PC-9 (cell line): ENCODE measurements at regions of chr1 and their contacts with region 1.

Region 1: DNA sequence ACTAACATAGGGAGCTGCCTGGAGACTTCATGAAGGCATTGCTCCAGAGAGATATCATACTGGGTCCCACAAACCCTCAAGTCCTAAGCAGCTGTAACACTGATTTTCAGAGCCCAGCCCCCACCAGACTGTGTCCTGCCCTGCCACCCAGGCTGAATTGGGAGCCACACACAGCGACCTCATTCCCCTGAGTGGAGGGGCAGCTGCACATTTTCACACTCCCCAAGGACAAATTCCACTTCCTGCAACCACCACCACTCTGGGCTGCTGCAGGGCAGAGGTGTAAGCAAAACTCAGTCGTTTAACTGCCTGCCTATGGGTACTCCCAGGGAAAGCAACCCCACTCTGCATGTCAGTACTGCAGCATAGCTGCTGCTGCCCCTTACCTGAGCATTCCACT is 19.8 kb downstream of the DTL start:
- DNase-seq: no peak
- H3K4me3 ChIP-seq: no peak overlapping the region
- H3K27ac ChIP-seq: no peak overlapping the region
- H3K4me1 ChIP-seq: no peaks in the 10 kb centered on the region
- H3K27me3 ChIP-seq: no peaks in the 10 kb centered on the region
- CTCF ChIP-seq: no peak

Region 2: DNA sequence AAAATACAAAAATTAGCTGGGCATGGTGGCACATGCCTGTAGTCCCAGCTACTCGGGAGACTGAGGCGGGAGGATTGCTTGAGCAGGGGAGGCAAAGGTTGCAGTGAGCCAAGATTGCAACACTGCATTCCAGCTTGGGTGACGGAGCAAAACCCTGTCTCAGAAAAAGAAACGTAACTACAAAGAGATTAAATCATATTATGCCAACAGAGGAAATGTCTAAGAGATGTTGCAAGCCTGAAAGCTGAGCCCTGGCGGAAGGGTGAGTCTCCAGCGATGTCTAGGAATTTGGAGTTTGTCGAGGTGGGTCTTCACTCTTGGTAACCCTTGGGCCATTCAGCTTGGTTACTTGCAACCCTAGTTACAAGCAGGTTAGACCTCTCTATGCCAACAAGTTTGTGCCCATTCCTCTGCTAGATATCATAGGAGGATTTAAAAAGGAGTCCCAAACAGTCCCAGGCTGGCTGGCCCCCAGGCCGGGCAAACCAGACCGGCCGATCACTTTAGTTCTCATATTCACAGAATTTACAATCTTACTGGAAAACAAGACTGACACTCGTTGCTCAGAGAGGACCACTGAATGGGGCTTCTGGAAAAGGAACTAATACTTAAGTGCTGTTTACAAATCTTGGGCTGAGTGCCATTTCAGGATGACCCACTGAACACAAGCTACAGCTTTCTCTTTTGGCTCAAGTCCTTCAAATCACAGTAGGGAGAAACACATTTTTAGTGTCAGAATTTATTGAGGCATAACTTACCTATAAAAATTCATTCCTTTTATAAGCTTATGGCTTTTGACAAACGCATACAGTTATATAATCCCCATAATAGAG is 503.5 kb before region 1 on chr1:
- CTCF ChIA-PET with region 1: interaction called, 10 read pairs
- POLR2A ChIA-PET with region 1: no interaction called
- intact Hi-C with region 1: no loop called
- DNase-seq: peak; percentile 86 to 97
- H3K4me3 ChIP-seq: peak overlapping the region; percentile 35; the same call in 1 of the 2 replicates
- H3K27ac ChIP-seq: peak overlapping the region; percentile 84
- H3K4me1 ChIP-seq: peaks cover 75% of the 10 kb centered on the region
- H3K27me3 ChIP-seq: no peaks in the 10 kb centered on the region
- CTCF ChIP-seq: no peak

Region 3: DNA sequence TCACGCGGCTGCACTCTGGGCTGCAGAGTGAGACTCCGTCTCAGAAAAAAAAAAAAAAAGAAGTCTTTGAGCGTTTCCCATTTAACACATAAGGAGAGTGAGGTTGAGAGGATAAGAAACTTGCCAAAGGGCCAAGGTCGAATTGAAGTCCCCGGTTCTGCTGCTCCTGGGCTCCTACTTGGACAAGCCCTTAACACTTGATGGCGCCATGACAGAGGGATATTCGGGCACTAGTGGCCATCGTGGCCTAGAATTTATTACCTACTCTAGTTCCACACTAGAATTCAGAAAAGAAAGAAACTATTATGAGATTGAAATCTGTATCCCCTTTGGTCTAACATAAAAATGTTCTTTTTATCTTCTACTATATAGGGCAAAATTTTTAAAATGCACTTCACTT is 314.2 kb before region 1 on chr1:
- CTCF ChIA-PET with region 1: no interaction called
- POLR2A ChIA-PET with region 1: no interaction called
- intact Hi-C with region 1: no loop called
- DNase-seq: no peak
- H3K4me3 ChIP-seq: no peak overlapping the region
- H3K27ac ChIP-seq: no peak overlapping the region
- H3K4me1 ChIP-seq: peaks cover 22% of the 10 kb centered on the region
- H3K27me3 ChIP-seq: no peaks in the 10 kb centered on the region
- CTCF ChIP-seq: no peak

Region 4: DNA sequence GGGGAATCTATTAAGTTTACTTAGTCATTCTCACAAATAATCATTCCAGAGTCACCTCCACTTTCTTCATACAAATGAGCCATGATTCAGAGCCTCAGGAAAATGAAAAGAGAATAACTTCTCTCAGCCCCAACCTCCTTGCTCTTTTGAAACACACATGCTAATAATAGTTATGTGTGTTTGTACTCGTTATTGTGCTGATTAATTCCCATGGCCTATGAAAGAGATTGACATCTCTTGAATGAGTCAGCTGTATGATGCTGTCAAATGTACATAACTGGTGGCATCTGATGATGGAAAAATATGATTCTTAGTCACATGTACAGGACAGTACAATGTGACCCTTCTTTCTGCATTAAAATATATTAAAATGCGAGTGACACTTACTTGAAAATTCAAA is 21.7 kb after region 1 on chr1:
- CTCF ChIA-PET with region 1: no interaction called
- POLR2A ChIA-PET with region 1: no interaction called
- intact Hi-C with region 1: no loop called
- DNase-seq: no peak
- H3K4me3 ChIP-seq: no peak overlapping the region
- H3K27ac ChIP-seq: no peak overlapping the region
- H3K4me1 ChIP-seq: no peaks in the 10 kb centered on the region
- H3K27me3 ChIP-seq: no peaks in the 10 kb centered on the region
- CTCF ChIP-seq: no peak